IMR-90 (cell line): ENCODE measurements at regions of chr22 and their contacts with region 1.

Region 1: GRCh38 chr22:24789516-24789915 is 15.0 kb upstream of the PIWIL3 start:
- DNase-seq: no peak
- ATAC-seq: no peak
- H3K4me3 ChIP-seq: no peak overlapping the region
- H3K27ac ChIP-seq: no peak overlapping the region
- H3K4me1 ChIP-seq: no peaks in the 10 kb centered on the region
- H3K27me3 ChIP-seq: peaks cover 2% of the 10 kb centered on the region; the same call in 1 of the 2 replicates
- CTCF ChIP-seq: no peak
- POLR2A ChIP-seq: no peak
- RAD21 ChIP-seq: no peak

Region 2: GRCh38 chr22:24834845-24835570 is 45.5 kb after region 1 on chr22:
- CTCF ChIA-PET with region 1: no interaction called
- POLR2A ChIA-PET with region 1: no interaction called
- dilution Hi-C with region 1: no loop called
- in situ Hi-C with region 1: no loop called
- intact Hi-C with region 1: loop called (anchors 1 kb)
- DNase-seq: peak; percentile 11
- ATAC-seq: no peak
- H3K4me3 ChIP-seq: no peak overlapping the region
- H3K27ac ChIP-seq: no peak overlapping the region
- H3K4me1 ChIP-seq: no peaks in the 10 kb centered on the region
- H3K27me3 ChIP-seq: peaks cover 13% of the 10 kb centered on the region
- CTCF ChIP-seq: no peak
- POLR2A ChIP-seq: no peak
- RAD21 ChIP-seq: no peak

Region 3: DNA sequence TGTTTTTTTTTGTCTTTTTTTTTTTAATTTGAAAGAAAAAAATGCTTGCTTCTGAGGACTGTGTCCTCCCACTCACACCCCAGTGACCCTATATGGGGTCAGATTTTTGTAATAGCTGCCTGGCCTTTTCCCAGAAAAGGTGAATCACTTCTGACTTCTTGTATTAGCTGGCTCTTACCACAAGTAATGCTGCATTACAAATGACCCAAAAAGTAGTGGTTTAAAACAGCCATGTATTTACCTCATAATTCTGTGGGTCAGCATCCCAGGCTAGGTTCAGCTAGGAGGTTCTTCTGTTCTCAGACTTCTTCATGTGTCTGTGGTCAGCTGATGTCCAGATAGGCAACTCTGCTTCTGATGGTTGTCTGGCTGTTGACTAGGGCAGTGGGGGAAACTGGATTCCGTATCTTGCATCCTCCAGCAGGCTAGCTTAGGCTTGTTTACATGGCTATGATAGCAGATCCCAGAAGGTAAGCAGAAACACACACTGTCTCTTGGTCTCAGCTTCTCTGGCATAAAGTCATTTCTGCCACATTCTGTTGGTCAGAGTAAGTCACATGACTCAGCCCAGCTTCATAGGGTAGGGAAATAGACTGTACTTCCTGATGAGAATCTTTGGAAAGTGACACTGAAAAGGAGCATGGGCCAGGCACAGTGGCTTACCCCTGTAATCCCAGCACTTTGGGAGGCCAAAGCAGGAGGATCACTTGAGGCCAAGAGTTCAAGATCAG is 137.5 kb after region 1 on chr22:
- CTCF ChIA-PET with region 1: no interaction called
- POLR2A ChIA-PET with region 1: no interaction called
- dilution Hi-C with region 1: no loop called
- in situ Hi-C with region 1: no loop called
- intact Hi-C with region 1: no loop called
- DNase-seq: no peak
- ATAC-seq: no peak
- H3K4me3 ChIP-seq: no peak overlapping the region
- H3K27ac ChIP-seq: no peak overlapping the region
- H3K4me1 ChIP-seq: no peaks in the 10 kb centered on the region
- H3K27me3 ChIP-seq: no peaks in the 10 kb centered on the region
- CTCF ChIP-seq: no peak
- POLR2A ChIP-seq: no peak
- RAD21 ChIP-seq: no peak

Region 4: DNA sequence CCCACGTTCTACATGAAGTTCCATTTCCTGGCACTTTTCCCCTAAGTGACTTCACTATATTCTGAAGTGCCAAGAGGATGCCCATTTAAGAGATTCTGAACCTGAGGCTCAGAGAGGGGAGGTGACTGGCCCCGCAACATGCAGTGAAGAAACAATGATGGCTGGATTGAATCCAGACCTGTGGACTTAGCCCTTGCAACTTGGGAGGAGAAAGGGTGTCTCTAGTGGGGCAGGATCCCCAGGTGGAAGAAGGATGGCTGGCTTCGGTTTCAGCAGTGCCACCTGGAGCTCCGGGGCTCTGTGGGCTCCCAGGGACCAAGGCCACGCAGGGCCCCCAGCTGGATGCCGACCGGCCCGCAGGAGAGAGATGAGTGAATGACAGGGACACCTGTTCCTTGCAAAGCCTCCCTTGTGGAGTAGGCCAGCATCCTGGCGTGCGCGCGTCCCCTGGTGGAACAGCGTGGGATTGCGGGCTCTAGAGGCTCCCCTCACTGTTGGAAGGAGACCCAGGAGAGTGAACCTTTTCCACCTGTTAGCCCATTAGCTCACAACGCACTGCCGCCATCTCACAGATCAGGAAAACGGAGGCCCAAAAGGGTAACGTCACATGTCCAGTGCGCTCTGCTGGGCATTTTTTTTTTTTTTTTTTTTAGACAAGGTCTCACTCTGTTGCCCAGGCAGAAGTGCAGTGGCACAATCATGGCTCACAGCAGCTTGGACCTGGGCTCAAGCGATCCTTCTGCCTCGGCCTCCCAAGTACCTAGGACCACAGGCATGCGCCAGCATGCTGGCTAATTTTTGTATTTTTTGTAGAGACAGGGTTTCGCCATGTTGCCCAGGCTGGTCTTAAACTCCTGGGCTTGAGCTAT is 267.7 kb after region 1 on chr22:
- CTCF ChIA-PET with region 1: no interaction called
- POLR2A ChIA-PET with region 1: interaction called, 10 read pairs
- dilution Hi-C with region 1: no loop called
- in situ Hi-C with region 1: no loop called
- intact Hi-C with region 1: no loop called
- DNase-seq: no peak
- ATAC-seq: peak; percentile 84
- H3K4me3 ChIP-seq: no peak overlapping the region
- H3K27ac ChIP-seq: no peak overlapping the region
- H3K4me1 ChIP-seq: no peaks in the 10 kb centered on the region
- H3K27me3 ChIP-seq: no peaks in the 10 kb centered on the region
- CTCF ChIP-seq: peak; percentile 58
- POLR2A ChIP-seq: no peak
- RAD21 ChIP-seq: peak; percentile 49